ENCODE measurements at regions of chr1 and their contacts with region 1.

Region 1: DNA sequence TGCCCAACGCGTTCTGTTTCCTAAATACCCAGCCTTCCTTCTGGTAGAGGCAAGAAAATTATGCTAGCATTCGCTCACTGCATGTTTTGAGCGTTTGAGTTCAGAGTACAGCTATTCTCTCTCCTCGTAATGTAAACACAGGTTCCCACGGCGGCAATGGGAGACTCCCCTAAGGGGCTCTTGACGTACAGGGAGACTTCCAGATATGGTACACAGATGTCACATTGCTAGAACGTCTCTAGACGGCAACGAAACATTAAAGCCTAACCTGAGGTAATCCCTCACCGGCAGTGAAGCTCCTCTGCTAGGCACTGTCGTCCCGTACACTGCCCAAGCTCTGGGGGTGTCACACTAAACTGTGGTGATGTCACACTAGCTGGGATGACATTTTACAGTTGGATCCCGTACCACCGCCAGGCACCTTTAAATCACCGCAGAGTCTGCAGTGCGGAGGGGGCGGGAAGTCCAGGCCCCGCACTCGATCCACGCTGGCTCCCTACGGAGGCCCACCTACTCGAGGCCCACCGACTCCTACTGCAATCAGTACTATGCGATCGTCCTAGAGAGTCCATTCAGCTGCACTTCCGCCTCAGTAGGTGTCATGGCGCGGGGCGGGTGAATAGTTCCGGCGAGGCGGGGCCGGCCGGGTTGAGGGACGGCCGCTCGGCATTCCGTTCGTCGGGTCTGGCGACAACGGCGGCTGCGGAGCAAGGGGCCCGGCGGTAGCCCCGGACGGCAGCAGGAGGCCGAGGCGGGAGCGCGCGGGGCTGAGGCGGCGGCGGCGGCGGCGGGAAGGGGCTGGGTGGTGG is at the start of gene HIPK1:
- DNase-seq: peak; percentile 95
- ATAC-seq: peak; percentile 77
- H3K4me3 Mint-ChIP-seq: peak within 1 kb of the TSS; percentile 86
- H3K27ac Mint-ChIP-seq: peak within 1 kb of the TSS; percentile 100
- H3K4me1 Mint-ChIP-seq: peaks cover 41% of the 10 kb centered on the region
- H3K27me3 Mint-ChIP-seq: peaks cover under 1% of the 10 kb centered on the region
- total RNA-seq, gene HIPK1: 90.4 to 97.9 TPM

Region 2: DNA sequence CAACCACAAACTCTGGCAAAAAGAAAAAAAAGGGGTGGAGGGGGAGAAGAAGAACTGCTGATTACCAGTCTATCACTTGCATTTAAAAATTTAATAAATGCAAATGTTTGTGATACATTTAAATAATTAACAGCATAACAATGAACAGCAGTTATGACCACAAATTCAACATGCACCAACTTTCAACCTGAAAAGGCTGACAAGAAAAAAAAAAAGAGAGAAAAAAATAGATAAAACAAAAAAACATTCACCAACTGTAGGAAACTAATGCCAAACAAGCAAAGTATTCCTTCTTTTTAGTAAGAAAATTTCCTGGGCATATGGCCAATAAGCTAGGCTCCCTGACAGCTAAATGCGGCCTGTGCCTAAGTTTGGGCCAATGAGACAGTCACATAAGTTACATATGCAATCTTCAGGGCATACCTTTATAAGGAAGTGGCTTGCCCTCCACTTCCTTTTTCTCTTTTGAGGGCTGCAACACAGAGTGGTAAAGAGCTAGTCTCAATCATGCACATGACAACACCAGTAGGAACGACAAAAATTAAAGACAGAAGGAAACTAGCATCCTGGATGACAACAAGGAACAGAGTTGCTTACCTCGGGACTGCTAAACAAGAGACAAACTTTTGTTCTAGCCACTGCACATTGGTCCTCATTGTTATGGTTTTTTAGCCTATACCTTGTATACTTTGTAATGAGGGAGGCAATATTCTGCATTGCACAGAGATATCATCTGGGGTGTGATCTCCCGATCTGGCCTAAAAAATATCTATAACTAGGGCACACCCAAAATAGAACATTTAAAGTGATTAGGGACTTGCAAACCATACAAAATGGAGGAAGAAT is 145.7 kb before region 1 on chr1:
- CTCF ChIA-PET with region 1: no interaction called
- DNase-seq: peak; percentile 78
- ATAC-seq: peak; percentile 96
- H3K4me3 Mint-ChIP-seq: peak overlapping the region; percentile 55
- H3K27ac Mint-ChIP-seq: peak overlapping the region; percentile 98
- H3K4me1 Mint-ChIP-seq: peaks cover 35% of the 10 kb centered on the region
- H3K27me3 Mint-ChIP-seq: no peaks in the 10 kb centered on the region

Region 3: DNA sequence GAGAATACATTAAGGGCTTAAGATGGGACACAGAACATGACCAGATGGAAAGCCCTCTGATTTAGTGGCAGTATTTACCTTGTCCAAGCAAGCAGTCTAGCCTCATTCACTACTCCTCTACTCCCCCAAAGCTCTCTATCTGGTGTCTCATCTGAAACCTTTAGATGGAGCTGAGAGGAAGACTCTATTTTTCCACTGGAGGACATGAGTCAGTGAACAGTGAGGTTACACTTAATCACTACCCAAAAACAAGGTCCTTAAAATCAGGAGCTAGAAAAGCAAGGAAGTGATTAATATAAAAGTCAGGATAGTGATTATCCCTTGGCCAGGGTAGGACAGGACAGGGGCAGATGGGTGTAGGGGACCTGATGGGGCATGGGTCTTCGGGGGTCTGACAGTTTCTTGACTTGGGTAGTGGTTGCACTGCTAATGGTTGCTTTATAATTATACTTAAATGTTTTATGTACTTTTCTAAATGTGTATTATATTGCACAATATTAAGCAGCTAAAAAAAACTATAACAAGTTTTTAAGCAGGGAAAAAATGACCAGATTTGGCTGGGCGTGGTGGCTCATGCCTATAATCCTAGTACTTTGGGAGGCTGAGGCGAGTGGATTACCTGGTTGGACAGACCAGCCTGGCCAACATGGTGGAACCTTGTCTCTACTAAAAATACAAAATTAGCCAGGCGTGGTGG is 60.6 kb before region 1 on chr1:
- CTCF ChIA-PET with region 1: interaction called, 16 read pairs
- DNase-seq: no peak
- ATAC-seq: peak; percentile 18
- H3K4me3 Mint-ChIP-seq: peak overlapping the region; percentile 86
- H3K27ac Mint-ChIP-seq: peak overlapping the region; percentile 99
- H3K4me1 Mint-ChIP-seq: peaks cover 57% of the 10 kb centered on the region
- H3K27me3 Mint-ChIP-seq: no peaks in the 10 kb centered on the region

Region 4: GRCh38 chr1:113904674-113905434 is 24.3 kb before region 1 on chr1 and contains the starts of genes AP4B1 and DCLRE1B:
- CTCF ChIA-PET with region 1: interaction called, 60 read pairs
- DNase-seq: peak; percentile 100
- ATAC-seq: peak; percentile 92
- H3K4me3 Mint-ChIP-seq: peak within 1 kb of the TSS; percentile 97
- H3K27ac Mint-ChIP-seq: peak within 1 kb of the TSS; percentile 89
- H3K4me1 Mint-ChIP-seq: peaks cover 60% of the 10 kb centered on the region
- H3K27me3 Mint-ChIP-seq: no peaks in the 10 kb centered on the region
- total RNA-seq, gene AP4B1: 57.3 to 61.8 TPM
- total RNA-seq, gene DCLRE1B: 19.5 to 21.1 TPM

Region 5: GRCh38 chr1:113949007-113949406 is 19.9 kb after region 1 on chr1:
- CTCF ChIA-PET with region 1: interaction called, 45 read pairs
- DNase-seq: no peak
- ATAC-seq: no peak
- H3K4me3 Mint-ChIP-seq: no peak overlapping the region
- H3K27ac Mint-ChIP-seq: no peak overlapping the region
- H3K4me1 Mint-ChIP-seq: peaks cover 52% of the 10 kb centered on the region
- H3K27me3 Mint-ChIP-seq: no peaks in the 10 kb centered on the region